ENCODE measurements at regions of chr15 and their contacts with region 1.

Region 1: DNA sequence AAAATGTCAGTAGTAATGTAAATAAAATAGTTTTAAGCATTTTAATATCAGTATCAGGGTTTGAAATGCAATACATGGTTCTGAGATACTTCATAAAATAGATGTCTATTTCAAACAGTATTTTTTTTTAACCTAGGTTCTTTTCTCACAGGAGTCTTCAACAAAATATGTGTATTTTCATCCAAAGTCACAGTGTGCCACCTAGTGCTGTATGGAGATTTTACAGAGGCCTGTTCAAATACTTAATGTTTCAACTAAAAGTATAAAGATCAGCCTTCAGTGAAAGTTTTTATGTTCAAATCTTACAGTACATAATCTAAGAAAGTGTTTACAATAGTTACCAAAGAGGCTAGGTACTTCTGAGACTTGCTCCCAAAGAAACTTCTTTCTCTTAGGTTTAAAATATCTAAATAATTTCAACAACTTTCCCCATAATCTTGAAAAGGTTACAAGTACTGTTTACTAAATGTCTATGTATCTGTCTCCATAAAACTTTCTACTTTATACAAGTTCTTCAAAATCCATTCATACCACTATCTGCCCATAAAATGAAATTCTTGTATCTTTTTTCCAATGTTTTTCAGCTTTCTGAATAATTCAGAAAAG is 38.3 kb downstream of the SCAPER start:
- H3K4me3 ChIP-seq: no peak overlapping the region
- H3K27ac ChIP-seq: no peak overlapping the region
- H3K4me1 ChIP-seq: peaks cover 27% of the 10 kb centered on the region; the same call in 1 of the 2 replicates
- CTCF ChIP-seq: no peak

Region 2: DNA sequence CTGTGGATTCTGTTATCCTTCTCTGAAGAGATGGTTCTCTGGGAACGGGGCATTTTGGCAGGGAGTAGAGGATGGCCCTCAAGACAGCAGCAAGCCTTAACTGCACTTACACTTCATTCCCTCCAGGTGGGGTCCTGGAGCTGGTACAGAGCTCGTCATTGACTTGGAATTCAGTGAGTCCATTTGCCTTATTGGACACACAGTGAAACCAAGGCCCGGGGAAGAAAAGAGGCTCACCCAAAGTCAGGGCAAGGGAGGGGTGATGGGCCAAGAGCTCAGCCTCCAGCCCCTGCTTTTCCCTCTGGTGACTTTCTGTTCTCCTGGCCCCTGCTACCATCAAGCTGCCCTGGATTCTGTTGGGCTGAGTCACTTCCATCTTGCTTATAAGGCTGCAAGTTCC is 681.1 kb before region 1 on chr15:
- CTCF ChIA-PET with region 1: interaction called, 35 read pairs
- POLR2A ChIA-PET with region 1: no interaction called
- H3K4me3 ChIP-seq: no peak overlapping the region
- H3K27ac ChIP-seq: no peak overlapping the region
- H3K4me1 ChIP-seq: no peaks in the 10 kb centered on the region; the same call in 1 of the 2 replicates
- CTCF ChIP-seq: no peak

Region 3: GRCh38 chr15:76190834-76191538 is 675.8 kb before region 1 on chr15:
- CTCF ChIA-PET with region 1: interaction called, 35 read pairs
- POLR2A ChIA-PET with region 1: no interaction called
- H3K4me3 ChIP-seq: no peak overlapping the region
- H3K27ac ChIP-seq: peak overlapping the region; percentile 33; the same call in 1 of the 2 replicates
- H3K4me1 ChIP-seq: peaks cover 3% of the 10 kb centered on the region
- CTCF ChIP-seq: peak; percentile 94

Region 4: DNA sequence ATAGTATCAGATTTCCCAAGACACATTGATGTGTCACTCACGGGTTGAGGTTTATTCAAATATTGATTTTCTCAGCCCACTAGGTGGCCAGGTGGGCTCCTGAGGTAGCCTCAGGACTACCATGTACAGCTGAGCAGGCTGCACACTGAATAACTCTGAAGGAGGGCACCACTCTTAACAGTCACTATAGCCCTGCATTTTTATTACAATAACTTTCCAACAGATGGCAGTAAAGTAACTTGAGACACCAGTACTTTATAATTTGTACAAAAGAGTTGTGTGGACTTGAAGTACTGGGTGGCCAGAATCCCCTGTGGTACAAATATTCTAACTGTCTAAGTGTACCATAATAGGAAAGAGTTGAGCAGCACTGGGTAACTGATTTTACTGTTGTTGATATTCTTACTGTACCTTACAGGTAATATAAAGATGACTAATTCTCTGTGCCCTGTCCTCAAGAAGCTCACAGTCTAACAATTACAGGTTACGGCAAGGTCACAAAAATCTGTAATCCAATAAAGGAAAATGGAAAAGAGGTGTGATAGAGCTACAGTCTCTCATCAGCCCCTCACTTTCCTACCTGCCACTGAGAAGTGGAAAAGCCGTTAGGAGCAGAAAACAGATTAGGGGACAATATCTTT is 631.5 kb before region 1 on chr15:
- CTCF ChIA-PET with region 1: interaction called, 10 read pairs
- POLR2A ChIA-PET with region 1: no interaction called
- H3K4me3 ChIP-seq: no peak overlapping the region
- H3K27ac ChIP-seq: no peak overlapping the region
- H3K4me1 ChIP-seq: peaks cover 28% of the 10 kb centered on the region
- CTCF ChIP-seq: peak; percentile 24; the same call in 1 of the 2 replicates

Measured in HEK293 (cell line).